ENCODE measurements at regions of chr16 and their contacts with region 1.

Region 1: DNA sequence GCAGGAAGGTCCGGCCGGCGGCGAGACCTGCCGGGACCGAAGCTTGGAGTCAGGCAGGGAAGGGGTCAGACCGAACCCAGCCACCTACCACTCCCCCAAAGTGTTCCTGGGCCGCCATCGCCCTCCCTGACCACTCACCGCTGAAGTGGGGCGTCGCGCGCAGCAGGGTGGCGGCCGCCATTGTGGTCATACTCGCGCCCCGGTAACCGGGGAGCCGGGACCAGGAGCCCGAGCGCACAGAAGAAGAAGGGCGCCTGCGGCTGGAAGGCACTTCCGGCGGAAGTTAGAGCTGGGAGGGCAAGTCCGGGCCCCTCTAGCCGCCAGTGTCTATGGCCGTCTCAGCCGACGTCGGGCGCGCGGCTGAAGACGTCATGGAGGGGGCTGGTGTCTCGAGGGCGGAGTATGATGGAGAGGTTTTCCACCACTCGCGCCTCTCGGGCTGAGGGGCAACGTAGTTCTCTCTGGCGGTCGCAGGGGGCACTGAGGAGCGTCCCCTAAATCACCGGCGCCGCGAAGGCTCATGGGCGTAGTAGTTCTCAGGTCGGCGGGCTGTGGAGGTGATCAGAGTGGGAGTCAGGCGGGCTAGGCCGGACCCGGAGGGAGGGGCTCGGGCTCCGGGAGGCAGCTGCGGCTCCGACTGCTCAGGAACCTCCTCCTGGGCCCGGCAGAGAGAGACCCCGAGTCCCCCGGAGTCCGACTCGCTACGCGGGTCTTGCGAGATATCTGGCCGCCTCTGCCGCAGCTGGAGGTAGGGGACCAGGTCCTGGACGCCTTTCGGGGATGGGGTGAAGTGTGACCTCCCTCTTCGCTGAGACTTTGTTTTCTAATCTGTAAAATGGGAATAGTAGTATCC is at the start of gene TUFM:
- DNase-seq: peak; percentile 92 to 99 (median 98)
- ATAC-seq: peak; percentile 96
- H3K4me3 ChIP-seq: peak within 1 kb of the TSS; percentile 100
- H3K4me3 Mint-ChIP-seq: peak within 1 kb of the TSS; percentile 90
- H3K27ac ChIP-seq: peak within 1 kb of the TSS; percentile 84 to 85
- H3K27ac Mint-ChIP-seq: peak within 1 kb of the TSS; percentile 85
- H3K4me1 ChIP-seq: peaks cover 34% of the 10 kb centered on the region
- H3K4me1 Mint-ChIP-seq: peaks cover 24% of the 10 kb centered on the region
- H3K27me3 ChIP-seq: no peaks in the 10 kb centered on the region
- H3K27me3 Mint-ChIP-seq: no peaks in the 10 kb centered on the region
- CTCF ChIP-seq: peak; percentile 68
- total RNA-seq, gene TUFM: 102 to 103 TPM

Region 2: DNA sequence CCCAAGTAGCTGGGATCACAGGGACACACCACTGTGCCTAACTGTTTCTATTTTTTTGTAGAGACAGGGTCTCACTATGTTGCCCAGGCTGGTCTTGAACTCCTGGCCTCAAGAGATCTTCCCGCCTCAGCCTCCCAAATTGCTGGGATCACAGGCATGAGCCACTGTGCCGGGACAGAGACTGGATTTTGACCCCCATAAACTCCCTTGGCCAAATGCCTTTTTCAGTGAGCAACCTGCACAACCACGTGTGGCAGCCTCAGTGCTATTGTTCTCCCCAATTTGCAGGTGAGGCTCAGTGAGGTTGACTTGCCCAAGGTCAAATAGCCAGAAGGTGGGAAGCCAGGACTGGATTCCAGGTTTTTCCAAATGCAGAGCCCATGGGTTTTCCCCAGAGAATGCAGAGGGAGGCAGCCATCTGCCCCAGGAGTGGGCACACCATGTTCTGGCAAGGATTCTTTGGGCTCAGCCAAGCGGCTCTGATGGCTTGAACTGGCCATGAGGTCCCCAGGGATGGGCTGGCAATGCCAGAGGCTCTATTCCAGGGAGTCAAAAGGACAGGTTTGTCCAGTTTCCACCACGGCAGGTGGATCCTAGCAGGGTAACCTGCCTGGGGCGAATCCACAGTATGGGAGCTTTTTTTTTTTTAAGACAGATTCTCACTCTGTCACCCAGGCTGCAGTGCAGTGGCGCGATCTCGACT is 341.4 kb before region 1 on chr16:
- CTCF ChIA-PET with region 1: no interaction called
- POLR2A ChIA-PET with region 1: no interaction called
- intact Hi-C with region 1: no loop called
- DNase-seq: no peak
- ATAC-seq: no peak
- H3K4me3 ChIP-seq: no peak overlapping the region
- H3K4me3 Mint-ChIP-seq: no peak overlapping the region
- H3K27ac ChIP-seq: no peak overlapping the region
- H3K27ac Mint-ChIP-seq: no peak overlapping the region
- H3K4me1 ChIP-seq: peaks cover 17% of the 10 kb centered on the region
- H3K4me1 Mint-ChIP-seq: peaks cover 10% of the 10 kb centered on the region
- H3K27me3 ChIP-seq: no peaks in the 10 kb centered on the region
- H3K27me3 Mint-ChIP-seq: no peaks in the 10 kb centered on the region
- CTCF ChIP-seq: no peak

Region 3: GRCh38 chr16:28553776-28554633 is 292.3 kb before region 1 on chr16 and contains the start of gene SGF29:
- CTCF ChIA-PET with region 1: no interaction called
- POLR2A ChIA-PET with region 1: no interaction called
- intact Hi-C with region 1: loop called in 1 of 2 experiments (anchors 10 kb)
- DNase-seq: peak; percentile 89 to 98 (median 93)
- ATAC-seq: peak; percentile 86
- H3K4me3 ChIP-seq: peak within 1 kb of the TSS; percentile 84
- H3K4me3 Mint-ChIP-seq: peak within 1 kb of the TSS; percentile 94
- H3K27ac ChIP-seq: peak within 1 kb of the TSS; percentile 90 to 98
- H3K27ac Mint-ChIP-seq: peak within 1 kb of the TSS; percentile 97
- H3K4me1 ChIP-seq: peaks cover 42% of the 10 kb centered on the region
- H3K4me1 Mint-ChIP-seq: peaks cover 43% of the 10 kb centered on the region
- H3K27me3 ChIP-seq: no peaks in the 10 kb centered on the region
- H3K27me3 Mint-ChIP-seq: no peaks in the 10 kb centered on the region
- CTCF ChIP-seq: peak; percentile 34
- total RNA-seq, gene SGF29: 38.9 to 40.3 TPM

Region 4: DNA sequence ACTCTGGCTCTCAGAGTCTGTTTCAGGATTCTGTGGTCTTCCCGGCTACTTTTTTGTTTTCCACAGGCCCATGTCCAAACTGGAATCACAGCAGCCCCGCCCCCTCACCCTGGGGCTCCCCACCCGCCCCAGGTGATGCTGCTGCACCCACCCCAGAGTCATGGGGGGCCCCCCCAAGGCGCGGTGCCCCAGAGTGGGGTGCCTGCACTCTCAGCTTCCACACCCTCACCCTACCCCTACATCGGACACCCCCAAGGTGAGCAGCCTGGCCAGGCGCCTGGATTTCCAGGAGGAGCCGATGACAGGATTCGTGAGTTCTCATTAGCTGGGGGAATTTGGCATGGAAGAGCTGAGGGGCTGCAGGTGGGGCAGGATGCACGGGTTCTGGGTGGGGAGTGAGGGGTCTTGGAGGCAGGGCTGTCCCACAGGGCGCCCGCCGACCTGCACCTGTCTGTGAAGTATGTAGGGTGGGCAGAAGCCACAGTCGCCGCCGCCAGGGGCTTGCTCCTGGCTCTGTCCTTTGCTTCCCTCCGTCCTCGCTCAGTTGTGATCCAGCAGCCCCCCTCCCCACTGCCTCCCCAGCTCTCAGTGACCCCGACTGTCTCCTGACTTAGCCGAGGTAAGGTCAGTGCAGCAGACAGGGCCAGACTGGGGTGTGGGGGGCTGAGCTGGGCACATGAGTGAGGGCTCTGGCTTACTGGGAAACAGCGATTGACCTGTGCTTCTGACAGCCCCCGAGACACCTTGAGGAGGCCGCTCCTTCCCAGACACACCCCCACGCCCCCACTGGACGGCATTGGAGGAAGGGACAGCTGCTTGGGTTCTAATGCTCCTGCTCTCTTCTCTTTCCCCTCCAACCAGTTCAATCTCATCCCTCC is 10.2 kb before region 1 on chr16:
- CTCF ChIA-PET with region 1: no interaction called
- POLR2A ChIA-PET with region 1: interaction called, 12 read pairs
- intact Hi-C with region 1: no loop called
- DNase-seq: no peak
- ATAC-seq: no peak
- H3K4me3 ChIP-seq: no peak overlapping the region
- H3K4me3 Mint-ChIP-seq: no peak overlapping the region
- H3K27ac ChIP-seq: no peak overlapping the region
- H3K27ac Mint-ChIP-seq: no peak overlapping the region
- H3K4me1 ChIP-seq: no peaks in the 10 kb centered on the region
- H3K4me1 Mint-ChIP-seq: peaks cover 9% of the 10 kb centered on the region
- H3K27me3 ChIP-seq: no peaks in the 10 kb centered on the region
- H3K27me3 Mint-ChIP-seq: no peaks in the 10 kb centered on the region
- CTCF ChIP-seq: no peak

Region 5: DNA sequence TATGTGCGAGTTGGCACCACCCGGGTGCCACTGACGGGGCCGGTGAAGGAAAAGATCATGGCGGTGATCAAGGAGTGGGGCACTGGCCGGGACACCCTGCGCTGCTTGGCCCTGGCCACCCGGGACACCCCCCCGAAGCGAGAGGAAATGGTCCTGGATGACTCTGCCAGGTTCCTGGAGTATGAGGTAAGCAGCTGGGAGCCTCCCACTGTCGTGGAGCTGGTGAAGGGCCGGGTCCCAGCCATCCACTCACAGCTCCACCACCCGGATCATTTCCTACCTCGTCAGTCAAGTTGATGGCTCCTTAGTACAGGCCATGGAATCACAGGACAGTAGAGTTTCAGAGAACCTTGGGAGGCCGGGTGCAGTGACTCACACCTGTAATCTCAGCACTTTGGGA is 52.0 kb after region 1 on chr16:
- CTCF ChIA-PET with region 1: no interaction called
- POLR2A ChIA-PET with region 1: no interaction called
- intact Hi-C with region 1: no loop called
- DNase-seq: no peak
- ATAC-seq: no peak
- H3K4me3 ChIP-seq: no peak overlapping the region
- H3K4me3 Mint-ChIP-seq: no peak overlapping the region
- H3K27ac ChIP-seq: no peak overlapping the region
- H3K27ac Mint-ChIP-seq: no peak overlapping the region
- H3K4me1 ChIP-seq: no peaks in the 10 kb centered on the region
- H3K4me1 Mint-ChIP-seq: no peaks in the 10 kb centered on the region
- H3K27me3 ChIP-seq: no peaks in the 10 kb centered on the region
- H3K27me3 Mint-ChIP-seq: no peaks in the 10 kb centered on the region
- CTCF ChIP-seq: no peak

Region 6: GRCh38 chr16:28924732-28925385 is 78.6 kb after region 1 on chr16 and contains the start of gene RABEP2:
- CTCF ChIA-PET with region 1: interaction called, 4 read pairs
- POLR2A ChIA-PET with region 1: interaction called, 10 read pairs
- intact Hi-C with region 1: loop called (anchors 1 to 5 kb)
- DNase-seq: peak; percentile 88 to 97 (median 95)
- ATAC-seq: peak; percentile 79
- H3K4me3 ChIP-seq: peak within 1 kb of the TSS; percentile 92
- H3K4me3 Mint-ChIP-seq: peak within 1 kb of the TSS; percentile 91
- H3K27ac ChIP-seq: peak within 1 kb of the TSS; percentile 93 to 98
- H3K27ac Mint-ChIP-seq: peak within 1 kb of the TSS; percentile 97
- H3K4me1 ChIP-seq: peaks cover 14% of the 10 kb centered on the region
- H3K4me1 Mint-ChIP-seq: peaks cover 20% of the 10 kb centered on the region
- H3K27me3 ChIP-seq: no peaks in the 10 kb centered on the region
- H3K27me3 Mint-ChIP-seq: no peaks in the 10 kb centered on the region
- CTCF ChIP-seq: no peak
- total RNA-seq, gene RABEP2: 23.3 to 23.4 TPM

Region 7: DNA sequence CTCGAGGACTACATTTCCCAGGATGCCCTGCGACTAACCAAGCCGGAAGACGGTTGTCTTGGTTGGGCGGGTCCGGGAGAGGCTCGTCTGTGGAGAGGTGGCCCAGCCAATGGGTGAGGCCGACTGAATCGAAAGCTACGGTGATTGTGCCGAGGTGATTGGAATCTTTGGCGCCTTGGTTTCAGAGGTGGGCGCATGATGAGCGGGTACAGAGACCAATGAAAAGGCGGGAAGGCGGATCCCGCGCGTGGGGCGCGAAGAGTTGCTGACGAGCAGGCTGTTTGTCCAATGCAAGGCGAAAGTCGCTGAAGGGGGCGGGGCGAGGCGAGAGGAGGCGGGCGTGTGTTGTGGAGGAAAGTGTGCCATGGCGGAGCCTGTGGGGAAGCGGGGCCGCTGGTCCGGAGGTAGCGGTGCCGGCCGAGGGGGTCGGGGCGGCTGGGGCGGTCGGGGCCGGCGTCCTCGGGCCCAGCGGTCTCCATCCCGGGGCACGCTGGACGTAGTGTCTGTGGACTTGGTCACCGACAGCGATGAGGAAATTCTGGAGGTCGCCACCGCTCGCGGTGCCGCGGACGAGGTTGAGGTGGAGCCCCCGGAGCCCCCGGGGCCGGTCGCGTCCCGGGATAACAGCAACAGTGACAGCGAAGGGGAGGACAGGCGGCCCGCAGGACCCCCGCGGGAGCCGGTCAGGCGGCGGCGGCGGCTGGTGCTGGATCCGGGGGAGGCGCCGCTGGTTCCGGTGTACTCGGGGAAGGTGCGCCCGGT is 104.5 kb after region 1 on chr16 and contains the start of gene NFATC2IP:
- CTCF ChIA-PET with region 1: interaction called, 8 read pairs
- POLR2A ChIA-PET with region 1: interaction called, 9 read pairs
- intact Hi-C with region 1: loop called in 1 of 2 experiments (anchors 1 kb)
- DNase-seq: peak; percentile 98 to 100 (median 99)
- ATAC-seq: peak; percentile 95
- H3K4me3 ChIP-seq: peak within 1 kb of the TSS; percentile 77
- H3K4me3 Mint-ChIP-seq: peak within 1 kb of the TSS; percentile 96
- H3K27ac ChIP-seq: peak within 1 kb of the TSS; percentile 36 to 63
- H3K27ac Mint-ChIP-seq: peak within 1 kb of the TSS; percentile 74
- H3K4me1 ChIP-seq: peaks cover 31% of the 10 kb centered on the region
- H3K4me1 Mint-ChIP-seq: peaks cover 28% of the 10 kb centered on the region
- H3K27me3 ChIP-seq: no peaks in the 10 kb centered on the region
- H3K27me3 Mint-ChIP-seq: no peaks in the 10 kb centered on the region
- CTCF ChIP-seq: no peak
- total RNA-seq, gene NFATC2IP: 47.4 to 51.0 TPM

Region 8: GRCh38 chr16:29112755-29113347 is 266.5 kb after region 1 on chr16:
- CTCF ChIA-PET with region 1: no interaction called
- POLR2A ChIA-PET with region 1: no interaction called
- intact Hi-C with region 1: no loop called
- DNase-seq: no peak
- ATAC-seq: no peak
- H3K4me3 ChIP-seq: no peak overlapping the region
- H3K4me3 Mint-ChIP-seq: no peak overlapping the region
- H3K27ac ChIP-seq: no peak overlapping the region
- H3K27ac Mint-ChIP-seq: peak overlapping the region; percentile 72
- H3K4me1 ChIP-seq: peaks cover 9% of the 10 kb centered on the region
- H3K4me1 Mint-ChIP-seq: peaks cover 28% of the 10 kb centered on the region
- H3K27me3 ChIP-seq: no peaks in the 10 kb centered on the region
- H3K27me3 Mint-ChIP-seq: no peaks in the 10 kb centered on the region
- CTCF ChIP-seq: no peak

Measured in CD4-positive, alpha-beta T cell (primary cell).